T-cell (primary cell): ENCODE measurements at regions of chr13 and their contacts with region 1.

Region 1: DNA sequence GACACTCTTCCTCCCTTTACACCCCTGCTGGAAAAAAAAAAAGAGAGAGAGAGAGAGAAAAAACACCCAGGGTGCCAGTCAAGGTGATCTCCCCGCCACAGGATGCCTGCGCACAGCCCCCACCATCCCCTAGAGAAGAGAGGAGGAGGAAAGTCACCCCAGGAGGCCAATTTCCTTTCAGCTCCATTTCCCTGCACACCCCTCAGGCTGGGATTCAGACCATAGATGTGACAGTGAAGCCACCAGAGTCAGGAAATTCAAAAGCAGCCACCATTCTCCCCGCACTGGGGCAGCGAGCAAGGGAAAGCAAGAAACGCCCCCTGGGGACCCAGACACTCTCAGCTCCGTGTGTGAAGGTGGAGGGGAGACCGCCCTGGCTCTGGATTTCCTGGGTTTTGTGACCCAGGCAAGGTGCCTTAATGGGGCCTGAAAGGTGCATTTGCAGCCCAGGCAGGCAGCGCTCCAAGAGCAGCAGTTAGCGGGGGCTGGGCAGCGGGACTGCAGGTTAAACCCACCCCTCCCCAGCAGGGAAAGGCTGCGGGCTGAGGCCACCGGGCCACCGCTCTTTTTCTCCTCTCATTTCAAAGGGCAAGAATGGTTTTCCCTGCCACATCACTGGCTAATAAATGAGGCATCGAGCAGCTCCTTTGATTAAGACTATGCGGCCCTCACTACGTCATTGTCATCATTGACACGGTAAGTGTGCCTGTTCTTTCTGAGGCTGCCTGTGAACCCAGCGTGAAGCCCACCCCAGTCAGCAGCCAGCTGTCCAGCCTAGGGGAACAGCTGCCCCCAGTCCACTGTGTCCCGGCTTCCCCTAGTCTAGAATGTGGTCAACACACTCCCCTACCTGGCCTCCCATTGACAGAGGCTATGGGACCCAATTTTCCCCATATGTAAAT is 83.8 kb upstream of the TM9SF2 start:
- DNase-seq: peak in 24 of 35 experiments; percentile 13 to 69 (median 50)
- ATAC-seq: peak; percentile 10 to 45 (median 11)
- H3K4me3 ChIP-seq: peak overlapping the region; percentile 47 to 84
- H3K4me3 Mint-ChIP-seq: no peak overlapping the region
- H3K27ac ChIP-seq: peak overlapping the region; percentile 71
- H3K27ac Mint-ChIP-seq: no peak overlapping the region
- H3K4me1 ChIP-seq: peaks cover 74 to 89% of the 10 kb centered on the region in 2 experiments
- H3K4me1 Mint-ChIP-seq: peaks cover 54 to 65% (median 57%) of the 10 kb centered on the region in 3 donors
- H3K27me3 ChIP-seq: peaks cover 0 to 14% of the 10 kb centered on the region in 2 experiments
- H3K27me3 Mint-ChIP-seq: no peaks in the 10 kb centered on the region

Region 2: DNA sequence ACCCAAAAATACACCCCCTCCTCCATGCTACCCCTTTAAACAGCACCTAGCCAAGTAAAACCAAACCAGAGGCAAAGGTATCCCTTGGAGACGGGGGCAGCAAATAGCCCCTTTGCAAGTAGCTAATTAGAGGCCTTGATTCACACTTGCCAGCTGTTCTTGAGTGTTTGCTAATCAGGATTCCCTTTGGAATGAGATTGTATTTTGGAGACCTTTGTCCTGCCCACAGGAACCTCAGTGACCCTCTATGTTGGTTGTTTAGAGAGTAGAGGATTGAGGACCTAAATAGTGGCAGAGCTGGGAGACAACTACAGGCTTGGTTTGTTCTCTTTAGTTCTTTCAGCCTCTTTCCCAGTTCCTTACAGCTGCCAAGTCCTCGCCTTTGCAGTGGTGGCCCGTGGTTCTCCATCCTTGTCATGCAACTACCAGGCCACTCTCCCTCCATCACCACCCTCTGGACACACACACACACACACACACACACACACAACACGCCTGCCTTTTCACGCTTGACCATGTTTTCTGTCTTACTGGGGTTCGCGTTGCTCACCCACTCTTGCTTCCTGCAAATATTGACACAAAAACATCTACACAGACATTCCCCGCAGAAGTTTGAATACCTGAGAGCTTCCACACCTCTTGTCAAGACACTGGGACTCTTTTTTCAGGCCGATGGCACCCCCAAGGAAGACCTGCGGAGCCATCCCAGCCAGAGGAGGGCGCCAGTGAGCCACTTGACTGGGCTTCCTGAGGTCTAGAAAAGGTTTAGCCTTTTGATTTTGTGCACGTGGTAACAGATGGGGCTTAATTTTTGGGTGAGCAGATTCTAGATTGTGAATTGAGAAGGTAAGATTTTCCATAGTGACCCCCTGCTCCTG is 30.3 kb before region 1 on chr13:
- CTCF ChIA-PET with region 1: interaction called, 9 to 10 read pairs
- POLR2A ChIA-PET with region 1: interaction called, 3 read pairs
- DNase-seq: peak; percentile 68 to 93 (median 85)
- ATAC-seq: peak; percentile 36 to 54 (median 42)
- H3K4me3 ChIP-seq: no peak overlapping the region
- H3K4me3 Mint-ChIP-seq: peak overlapping the region in 1 of 3 donors; percentile 46
- H3K27ac ChIP-seq: peak overlapping the region; percentile 81
- H3K27ac Mint-ChIP-seq: peak overlapping the region; percentile 98
- H3K4me1 ChIP-seq: peaks cover 53 to 76% of the 10 kb centered on the region in 2 experiments
- H3K4me1 Mint-ChIP-seq: peaks cover 65 to 73% (median 73%) of the 10 kb centered on the region in 3 donors
- H3K27me3 ChIP-seq: no peaks in the 10 kb centered on the region
- H3K27me3 Mint-ChIP-seq: no peaks in the 10 kb centered on the region